ENCODE measurements at regions of chr17 and their contacts with region 1.

Region 1: GRCh38 chr17:50169121-50169764 is 3.4 kb downstream of the SGCA start:
- DNase-seq: peak; percentile 66
- ATAC-seq: peak; percentile 69
- H3K4me3 Mint-ChIP-seq: peak overlapping the region; percentile 7
- H3K27ac Mint-ChIP-seq: peak overlapping the region; percentile 53
- H3K4me1 Mint-ChIP-seq: peaks cover 17% of the 10 kb centered on the region
- H3K27me3 Mint-ChIP-seq: no peaks in the 10 kb centered on the region

Region 2: GRCh38 chr17:50114849-50115357 is 54.3 kb before region 1 on chr17:
- CTCF ChIA-PET with region 1: interaction called, 12 read pairs
- POLR2A ChIA-PET with region 1: interaction called, 3 read pairs
- DNase-seq: peak; percentile 73
- ATAC-seq: peak; percentile 46
- H3K4me3 Mint-ChIP-seq: no peak overlapping the region
- H3K27ac Mint-ChIP-seq: no peak overlapping the region
- H3K4me1 Mint-ChIP-seq: peaks cover 11% of the 10 kb centered on the region
- H3K27me3 Mint-ChIP-seq: peaks cover 40% of the 10 kb centered on the region

Region 3: DNA sequence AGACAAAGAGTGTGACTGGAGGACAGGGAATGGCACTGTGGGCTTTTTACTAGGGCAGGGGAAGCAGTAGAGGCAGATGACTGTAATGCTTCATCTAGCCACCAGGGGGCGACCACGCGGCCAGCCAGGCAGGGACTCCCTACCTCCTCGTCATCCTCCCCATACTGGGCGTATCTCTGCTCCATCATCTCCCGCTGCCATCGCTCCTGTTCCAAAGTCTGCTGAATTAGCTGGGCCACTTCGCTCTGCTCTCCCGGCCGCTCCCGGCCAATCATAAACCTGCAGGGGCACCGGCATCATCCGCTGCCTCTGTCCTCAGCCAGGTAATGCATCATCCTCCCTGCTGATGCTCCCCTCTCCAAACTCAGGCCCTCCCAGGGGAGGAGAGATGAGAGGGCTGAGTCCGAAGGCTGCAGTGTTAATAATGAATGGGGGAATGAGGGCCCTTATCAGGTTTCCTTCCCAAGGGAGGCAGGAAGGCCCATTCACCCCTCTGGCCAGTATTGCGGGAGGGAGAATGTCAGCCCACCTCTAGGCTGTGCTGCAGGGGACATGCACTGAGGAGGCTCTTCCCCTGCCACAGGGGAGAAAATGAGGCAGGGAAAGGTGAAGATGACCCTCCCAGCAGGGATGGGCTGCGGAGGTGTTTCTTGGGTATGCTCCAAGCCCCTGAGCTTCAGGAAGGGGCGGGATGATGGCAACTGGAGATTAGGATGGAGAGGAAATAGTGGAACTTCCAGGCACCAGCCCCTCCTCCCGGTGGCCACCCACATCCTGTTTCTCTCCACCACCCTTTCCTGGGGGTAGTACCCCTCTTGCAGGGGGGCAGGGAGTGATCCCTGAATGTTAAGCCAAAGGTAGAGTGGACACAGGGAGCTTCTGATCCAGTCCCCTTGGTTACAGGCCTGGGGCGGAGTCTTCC is 29.0 kb before region 1 on chr17:
- CTCF ChIA-PET with region 1: interaction called, 15 read pairs
- POLR2A ChIA-PET with region 1: interaction called, 5 read pairs
- DNase-seq: peak; percentile 88
- ATAC-seq: peak; percentile 90
- H3K4me3 Mint-ChIP-seq: peak overlapping the region; percentile 62
- H3K27ac Mint-ChIP-seq: peak overlapping the region; percentile 90
- H3K4me1 Mint-ChIP-seq: peaks cover 62% of the 10 kb centered on the region
- H3K27me3 Mint-ChIP-seq: no peaks in the 10 kb centered on the region

Region 4: GRCh38 chr17:50151041-50151936 is 18.0 kb before region 1 on chr17:
- CTCF ChIA-PET with region 1: interaction called, 10 read pairs
- POLR2A ChIA-PET with region 1: interaction called, 3 read pairs
- DNase-seq: peak; percentile 94
- ATAC-seq: peak; percentile 77
- H3K4me3 Mint-ChIP-seq: peak overlapping the region; percentile 84
- H3K27ac Mint-ChIP-seq: peak overlapping the region; percentile 94
- H3K4me1 Mint-ChIP-seq: peaks cover 49% of the 10 kb centered on the region
- H3K27me3 Mint-ChIP-seq: no peaks in the 10 kb centered on the region

Region 5: GRCh38 chr17:50269477-50270434 is 100.5 kb after region 1 on chr17:
- CTCF ChIA-PET with region 1: interaction called, 12 read pairs
- POLR2A ChIA-PET with region 1: no interaction called
- DNase-seq: peak; percentile 80
- ATAC-seq: peak; percentile 82
- H3K4me3 Mint-ChIP-seq: no peak overlapping the region
- H3K27ac Mint-ChIP-seq: no peak overlapping the region
- H3K4me1 Mint-ChIP-seq: peaks cover 18% of the 10 kb centered on the region
- H3K27me3 Mint-ChIP-seq: peaks cover 18% of the 10 kb centered on the region